SK-N-SH (cell line): ENCODE measurements at regions of chr6 and their contacts with region 1.

Region 1: DNA sequence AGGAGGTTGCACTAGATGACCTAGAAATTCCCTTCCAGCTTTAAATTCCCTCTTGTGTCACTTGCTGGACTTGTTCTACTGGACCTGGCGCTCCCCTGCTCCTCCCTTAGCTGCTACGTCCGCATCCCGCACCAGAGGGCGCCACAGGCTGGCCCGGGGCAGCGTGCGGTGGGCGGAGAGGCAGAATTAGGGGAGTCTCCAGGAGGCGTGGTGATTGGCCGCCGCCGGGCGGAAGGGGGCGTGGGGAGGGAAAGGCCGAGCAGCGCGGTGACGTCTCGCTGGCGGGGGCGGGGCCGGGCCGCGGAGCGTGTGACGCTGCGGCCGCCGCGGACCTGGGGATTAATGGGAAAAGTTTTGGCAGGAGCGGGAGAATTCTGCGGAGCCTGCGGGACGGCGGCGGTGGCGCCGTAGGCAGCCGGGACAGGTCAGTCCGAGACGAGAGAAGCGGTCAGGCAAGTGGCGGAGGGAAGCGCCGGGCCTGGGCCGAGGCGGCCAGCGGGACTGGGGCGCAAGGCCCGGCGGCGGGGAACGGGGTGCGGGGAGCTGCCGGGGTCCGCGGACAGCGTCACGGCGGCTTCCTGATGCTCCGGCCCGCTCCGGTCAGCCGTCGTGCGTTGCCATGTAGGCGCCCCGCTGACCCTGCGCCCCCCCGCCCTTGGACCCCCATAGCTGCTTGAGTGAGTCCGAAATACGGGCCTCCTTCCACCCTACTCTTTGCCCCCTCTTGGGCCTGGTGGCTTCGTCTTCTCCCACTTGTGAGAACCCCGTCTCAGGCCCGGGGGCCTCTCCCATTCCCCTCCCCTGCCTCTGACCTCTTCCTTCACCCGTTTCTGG is at the start of gene PPARD:
- DNase-seq: peak; percentile 100
- H3K4me3 ChIP-seq: peak within 1 kb of the TSS; percentile 74 to 85
- H3K27ac ChIP-seq: peak within 1 kb of the TSS; percentile 45 to 87
- H3K4me1 ChIP-seq: peaks cover 0 to 23% of the 10 kb centered on the region in 2 experiments; a peak in 2 of 4 replicates
- H3K27me3 ChIP-seq: no peaks in the 10 kb centered on the region
- CTCF ChIP-seq: peak; percentile 98
- EP300 ChIP-seq: no peak
- RAD21 ChIP-seq: peak; percentile 99
- polyA plus RNA-seq, gene PPARD: 11.5 and 13.3 TPM in 2 replicates

Region 2: GRCh38 chr6:35230950-35231349 is 111.5 kb before region 1 on chr6:
- CTCF ChIA-PET with region 1: no interaction called
- POLR2A ChIA-PET with region 1: no interaction called
- DNase-seq: no peak
- H3K4me3 ChIP-seq: no peak overlapping the region
- H3K27ac ChIP-seq: no peak overlapping the region
- H3K4me1 ChIP-seq: peaks cover 0 to 10% of the 10 kb centered on the region in 2 experiments; a peak in 1 of 4 replicates
- H3K27me3 ChIP-seq: no peaks in the 10 kb centered on the region
- CTCF ChIP-seq: no peak
- EP300 ChIP-seq: no peak
- RAD21 ChIP-seq: no peak

Region 3: DNA sequence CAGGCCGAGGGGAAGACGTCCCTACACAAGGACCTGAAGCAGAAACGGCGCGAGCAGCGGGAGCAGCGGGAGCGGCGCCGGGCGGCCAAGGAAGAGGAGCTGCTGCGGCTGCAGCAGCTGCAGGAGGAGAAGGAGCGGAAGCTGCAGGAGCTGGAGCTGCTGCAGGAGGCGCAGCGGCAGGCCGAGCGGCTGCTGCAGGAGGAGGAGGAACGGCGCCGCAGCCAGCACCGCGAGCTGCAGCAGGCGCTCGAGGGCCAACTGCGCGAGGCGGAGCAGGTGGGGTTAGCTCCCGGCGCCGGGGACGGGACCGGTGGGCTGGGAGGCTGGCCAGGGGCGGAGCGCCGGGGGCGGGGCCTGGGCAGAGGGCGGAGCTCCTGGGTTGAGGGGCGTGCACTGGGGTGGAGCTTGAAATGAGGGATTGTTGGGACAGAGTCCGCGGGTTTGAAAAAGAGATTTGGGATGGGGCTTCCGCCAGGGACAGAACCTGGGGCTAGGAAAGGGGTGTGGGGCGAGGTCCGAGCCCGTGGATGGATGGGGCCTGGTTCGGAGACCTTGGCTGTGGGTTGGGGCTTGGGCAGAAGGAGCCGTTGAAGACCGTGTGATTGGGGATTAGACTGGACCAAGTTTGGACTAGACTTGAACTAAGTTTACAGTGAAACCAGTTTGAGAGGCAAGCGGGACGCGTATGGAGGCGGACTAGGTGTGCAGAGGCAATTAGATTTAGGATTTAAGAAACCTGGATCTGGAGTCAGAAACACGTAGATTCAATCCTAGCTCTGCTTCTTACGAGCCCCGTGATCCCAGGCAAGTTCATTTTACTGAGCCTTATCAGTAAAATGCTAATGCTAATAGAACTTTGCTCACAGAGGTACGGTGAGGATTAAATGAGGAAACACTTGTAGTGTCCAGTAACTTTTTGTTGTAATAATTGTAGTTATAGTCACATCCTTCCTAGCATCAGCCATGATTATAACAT is 24.0 kb before region 1 on chr6:
- CTCF ChIA-PET with region 1: interaction called, 23 read pairs
- POLR2A ChIA-PET with region 1: no interaction called
- DNase-seq: peak; percentile 99
- H3K4me3 ChIP-seq: peak overlapping the region; percentile 62 to 71
- H3K27ac ChIP-seq: peak overlapping the region in 1 of 2 experiments; percentile 61; a peak in 2 of 4 replicates
- H3K4me1 ChIP-seq: peaks cover 0 to 7% of the 10 kb centered on the region in 2 experiments; a peak in 1 of 4 replicates
- H3K27me3 ChIP-seq: peaks cover 10% of the 10 kb centered on the region; the same call in 1 of the 2 replicates
- CTCF ChIP-seq: no peak
- EP300 ChIP-seq: no peak
- RAD21 ChIP-seq: no peak

Region 4: GRCh38 chr6:35415065-35415991 is 72.9 kb after region 1 on chr6:
- CTCF ChIA-PET with region 1: interaction called, 13 read pairs
- POLR2A ChIA-PET with region 1: no interaction called
- DNase-seq: peak; percentile 63
- H3K4me3 ChIP-seq: no peak overlapping the region; a peak in 1 of 4 replicates
- H3K27ac ChIP-seq: peak overlapping the region in 1 of 2 experiments; percentile 36; a peak in 3 of 4 replicates
- H3K4me1 ChIP-seq: peaks cover 0 to 31% of the 10 kb centered on the region in 2 experiments; a peak in 2 of 4 replicates
- H3K27me3 ChIP-seq: no peaks in the 10 kb centered on the region
- CTCF ChIP-seq: peak; percentile 69
- EP300 ChIP-seq: no peak
- RAD21 ChIP-seq: peak; percentile 64

Region 5: DNA sequence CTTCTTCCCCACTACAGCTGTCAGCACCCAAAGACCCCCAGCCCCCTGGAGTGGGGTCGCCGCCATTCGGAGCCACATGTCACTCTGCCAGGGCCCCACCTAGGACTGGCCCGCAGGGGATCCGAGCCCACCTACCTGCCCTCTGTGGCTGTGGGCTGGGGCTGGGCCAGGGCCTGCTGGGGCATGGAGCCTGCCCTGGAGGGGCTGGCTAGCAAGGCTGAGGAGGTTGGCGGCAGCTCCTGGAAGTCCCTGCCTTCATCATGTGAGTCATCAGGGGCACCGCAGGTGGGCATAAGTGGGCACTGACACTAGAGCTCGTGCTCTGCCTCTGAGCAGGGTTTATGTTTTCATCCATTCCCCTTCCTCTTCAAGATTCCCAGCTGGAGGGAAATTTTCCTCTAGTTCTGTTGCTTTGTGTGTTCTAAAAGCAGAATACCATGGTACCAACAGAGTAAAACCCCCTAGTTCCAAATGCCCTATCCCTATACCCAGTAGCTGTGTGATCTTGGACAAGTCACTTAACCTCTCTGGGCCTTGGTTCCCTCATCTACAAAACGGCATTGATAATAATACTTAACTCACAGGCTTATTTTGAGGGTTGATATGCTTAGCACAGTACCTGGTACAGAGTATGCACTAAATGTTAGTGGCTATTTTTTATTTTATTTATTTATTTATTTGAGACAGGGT is 101.0 kb after region 1 on chr6:
- CTCF ChIA-PET with region 1: interaction called, 186 read pairs
- POLR2A ChIA-PET with region 1: interaction called, 14 read pairs
- DNase-seq: no peak
- H3K4me3 ChIP-seq: no peak overlapping the region
- H3K27ac ChIP-seq: no peak overlapping the region
- H3K4me1 ChIP-seq: no peaks in the 10 kb centered on the region
- H3K27me3 ChIP-seq: no peaks in the 10 kb centered on the region
- CTCF ChIP-seq: no peak
- EP300 ChIP-seq: no peak
- RAD21 ChIP-seq: no peak

Region 6: GRCh38 chr6:35457907-35458306 is 115.4 kb after region 1 on chr6:
- CTCF ChIA-PET with region 1: interaction called, 186 read pairs
- POLR2A ChIA-PET with region 1: no interaction called
- DNase-seq: no peak
- H3K4me3 ChIP-seq: no peak overlapping the region
- H3K27ac ChIP-seq: no peak overlapping the region
- H3K4me1 ChIP-seq: peaks cover 0 to 7% of the 10 kb centered on the region in 2 experiments; a peak in 2 of 4 replicates
- H3K27me3 ChIP-seq: no peaks in the 10 kb centered on the region
- CTCF ChIP-seq: no peak
- EP300 ChIP-seq: no peak
- RAD21 ChIP-seq: no peak